ENCODE measurements at regions of chr2 and their contacts with region 1.

Region 1: GRCh38 chr2:109031476-109032228 is 42.6 kb upstream of the EDAR start:
- DNase-seq: peak; percentile 45 to 92 (median 88)
- H3K4me3 ChIP-seq: peak overlapping the region; percentile 57
- H3K4me3 Mint-ChIP-seq: peak overlapping the region; percentile 71 to 90 (median 81)
- H3K27ac ChIP-seq: peak overlapping the region; percentile 71
- H3K27ac Mint-ChIP-seq: peak overlapping the region; percentile 83 to 99 (median 92)
- H3K4me1 ChIP-seq: peaks cover 71% of the 10 kb centered on the region
- H3K4me1 Mint-ChIP-seq: peaks cover 51 to 77% (median 63%) of the 10 kb centered on the region in 3 donors
- H3K27me3 ChIP-seq: no peaks in the 10 kb centered on the region
- H3K27me3 Mint-ChIP-seq: no peaks in the 10 kb centered on the region

Region 2: DNA sequence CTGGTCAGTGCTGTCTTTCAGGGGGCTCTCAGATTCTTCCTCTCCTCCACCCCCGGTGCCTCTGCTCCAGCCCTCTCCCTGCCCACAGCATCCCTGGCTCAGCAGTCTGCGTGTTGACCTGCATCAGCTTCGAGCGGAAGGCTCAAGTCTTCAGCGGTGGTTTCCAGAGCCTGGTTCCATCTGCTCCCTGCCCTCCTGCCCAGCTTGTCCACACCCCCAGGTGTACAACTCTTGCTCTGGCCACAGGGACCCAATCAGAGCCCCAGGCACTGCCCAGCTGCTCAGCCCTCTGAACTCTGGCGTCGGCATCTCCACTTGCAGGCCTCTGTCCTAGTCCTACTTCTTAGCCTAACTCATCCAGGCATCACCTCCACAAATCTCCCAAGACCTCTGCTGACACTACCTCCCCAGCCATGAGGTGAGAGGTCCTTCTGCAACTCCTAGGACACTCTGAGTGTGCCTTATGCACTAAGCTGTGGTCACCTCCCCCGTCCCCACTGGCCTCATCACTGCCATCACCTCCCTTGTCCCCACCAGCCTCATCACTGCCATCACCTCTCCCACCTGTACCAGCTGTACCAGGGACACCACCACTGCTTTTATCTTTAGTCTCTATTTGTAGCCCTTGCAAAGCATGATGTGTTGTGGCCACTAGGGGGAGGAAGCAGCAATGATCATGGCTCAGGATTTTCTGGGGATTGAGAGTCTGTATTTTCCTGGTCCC is 103.6 kb before region 1 on chr2:
- CTCF ChIA-PET with region 1: interaction called, 10 read pairs
- POLR2A ChIA-PET with region 1: interaction called, 3 read pairs
- DNase-seq: peak in 2 of 5 donors; percentile 33 to 48
- H3K4me3 ChIP-seq: no peak overlapping the region
- H3K4me3 Mint-ChIP-seq: no peak overlapping the region
- H3K27ac ChIP-seq: no peak overlapping the region
- H3K27ac Mint-ChIP-seq: peak overlapping the region in 1 of 8 donors; percentile 3
- H3K4me1 ChIP-seq: no peaks in the 10 kb centered on the region
- H3K4me1 Mint-ChIP-seq: peaks cover 2 to 6% (median 5%) of the 10 kb centered on the region in 3 donors
- H3K27me3 ChIP-seq: no peaks in the 10 kb centered on the region
- H3K27me3 Mint-ChIP-seq: peaks cover 0 to 2% of the 10 kb centered on the region in 2 donors

Region 3: DNA sequence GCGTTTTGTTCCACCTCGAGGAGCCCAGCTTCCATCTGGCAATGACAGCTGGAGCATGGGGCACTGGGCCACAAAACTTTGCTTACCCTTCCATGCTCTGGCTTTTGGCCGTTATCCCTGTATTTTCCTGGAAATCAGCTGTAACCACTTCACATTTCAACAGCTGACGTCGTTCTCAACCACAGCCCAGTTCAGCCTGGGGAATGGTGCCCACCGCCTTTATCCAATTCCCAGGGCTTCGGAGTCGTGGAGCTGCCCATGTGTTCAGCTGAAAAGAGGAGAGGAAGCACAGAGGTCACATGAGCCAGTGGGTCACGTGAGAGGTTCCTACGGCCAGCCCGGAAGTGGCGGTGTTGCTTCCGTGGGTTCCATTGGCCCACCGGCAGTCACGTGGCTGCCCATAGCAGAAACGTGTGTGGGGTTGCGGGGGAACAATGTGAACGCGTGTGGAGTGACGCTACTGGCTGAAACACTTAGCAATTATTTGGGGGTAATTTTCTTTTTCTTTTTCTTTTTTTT is 25.9 kb before region 1 on chr2:
- CTCF ChIA-PET with region 1: no interaction called
- POLR2A ChIA-PET with region 1: interaction called, 10 read pairs
- DNase-seq: no peak
- H3K4me3 ChIP-seq: no peak overlapping the region
- H3K4me3 Mint-ChIP-seq: no peak overlapping the region
- H3K27ac ChIP-seq: no peak overlapping the region
- H3K27ac Mint-ChIP-seq: no peak overlapping the region
- H3K4me1 ChIP-seq: peaks cover 8% of the 10 kb centered on the region
- H3K4me1 Mint-ChIP-seq: peaks cover 4 to 9% (median 8%) of the 10 kb centered on the region in 3 donors
- H3K27me3 ChIP-seq: no peaks in the 10 kb centered on the region
- H3K27me3 Mint-ChIP-seq: peaks cover 0 to 1% of the 10 kb centered on the region in 2 donors

Region 4: DNA sequence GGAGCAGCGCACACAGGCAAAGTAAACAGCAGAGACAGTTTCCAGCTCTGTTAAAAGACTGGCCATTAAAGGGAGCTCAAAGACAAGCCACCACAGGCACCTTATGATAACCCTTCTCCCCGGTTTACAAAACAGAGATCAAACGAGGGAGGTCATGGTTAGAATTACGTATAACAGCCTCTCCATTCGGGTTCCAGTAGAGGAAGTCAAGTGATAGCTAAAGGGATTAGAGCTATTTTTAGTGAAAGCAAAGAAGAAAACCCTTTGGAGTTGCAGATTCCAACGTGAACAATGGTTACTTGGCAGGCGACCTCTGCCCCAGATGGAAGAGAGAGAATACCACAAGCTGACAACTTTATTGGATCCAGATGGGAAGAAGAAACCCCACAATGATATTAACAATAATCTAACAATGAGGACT is 11.4 kb before region 1 on chr2:
- CTCF ChIA-PET with region 1: interaction called, 10 read pairs
- POLR2A ChIA-PET with region 1: interaction called, 12 read pairs
- DNase-seq: peak in 2 of 5 donors; percentile 15 to 40
- H3K4me3 ChIP-seq: no peak overlapping the region
- H3K4me3 Mint-ChIP-seq: no peak overlapping the region
- H3K27ac ChIP-seq: no peak overlapping the region
- H3K27ac Mint-ChIP-seq: no peak overlapping the region
- H3K4me1 ChIP-seq: peaks cover 13% of the 10 kb centered on the region
- H3K4me1 Mint-ChIP-seq: peaks cover 6 to 13% (median 10%) of the 10 kb centered on the region in 3 donors
- H3K27me3 ChIP-seq: no peaks in the 10 kb centered on the region
- H3K27me3 Mint-ChIP-seq: peaks cover 0 to 5% of the 10 kb centered on the region in 2 donors

Region 5: GRCh38 chr2:109128048-109128465 is 96.4 kb after region 1 on chr2:
- CTCF ChIA-PET with region 1: interaction called, 6 read pairs
- POLR2A ChIA-PET with region 1: interaction called, 11 read pairs
- DNase-seq: peak in 4 of 5 donors; percentile 39 to 69 (median 49)
- H3K4me3 ChIP-seq: peak overlapping the region; percentile 63
- H3K4me3 Mint-ChIP-seq: peak overlapping the region; percentile 45 to 88 (median 75)
- H3K27ac ChIP-seq: no peak overlapping the region
- H3K27ac Mint-ChIP-seq: peak overlapping the region in 3 of 8 donors; percentile 42 to 67 (median 61)
- H3K4me1 ChIP-seq: peaks cover 10% of the 10 kb centered on the region
- H3K4me1 Mint-ChIP-seq: peaks cover 11 to 17% (median 16%) of the 10 kb centered on the region in 3 donors
- H3K27me3 ChIP-seq: no peaks in the 10 kb centered on the region
- H3K27me3 Mint-ChIP-seq: peaks cover 28 to 57% of the 10 kb centered on the region in 2 donors

Region 6: GRCh38 chr2:109242654-109243331 is 211.1 kb after region 1 on chr2:
- CTCF ChIA-PET with region 1: no interaction called
- POLR2A ChIA-PET with region 1: no interaction called
- DNase-seq: no peak
- H3K4me3 ChIP-seq: no peak overlapping the region
- H3K4me3 Mint-ChIP-seq: no peak overlapping the region
- H3K27ac ChIP-seq: no peak overlapping the region
- H3K27ac Mint-ChIP-seq: no peak overlapping the region
- H3K4me1 ChIP-seq: peaks cover 7% of the 10 kb centered on the region
- H3K4me1 Mint-ChIP-seq: peaks cover 11 to 14% (median 13%) of the 10 kb centered on the region in 3 donors
- H3K27me3 ChIP-seq: no peaks in the 10 kb centered on the region
- H3K27me3 Mint-ChIP-seq: peaks cover 4 to 5% of the 10 kb centered on the region in 2 donors

Measured in CD8-positive, alpha-beta memory T cell (primary cell).